ENCODE measurements at regions of chr11 and their contacts with region 1.

Region 1: DNA sequence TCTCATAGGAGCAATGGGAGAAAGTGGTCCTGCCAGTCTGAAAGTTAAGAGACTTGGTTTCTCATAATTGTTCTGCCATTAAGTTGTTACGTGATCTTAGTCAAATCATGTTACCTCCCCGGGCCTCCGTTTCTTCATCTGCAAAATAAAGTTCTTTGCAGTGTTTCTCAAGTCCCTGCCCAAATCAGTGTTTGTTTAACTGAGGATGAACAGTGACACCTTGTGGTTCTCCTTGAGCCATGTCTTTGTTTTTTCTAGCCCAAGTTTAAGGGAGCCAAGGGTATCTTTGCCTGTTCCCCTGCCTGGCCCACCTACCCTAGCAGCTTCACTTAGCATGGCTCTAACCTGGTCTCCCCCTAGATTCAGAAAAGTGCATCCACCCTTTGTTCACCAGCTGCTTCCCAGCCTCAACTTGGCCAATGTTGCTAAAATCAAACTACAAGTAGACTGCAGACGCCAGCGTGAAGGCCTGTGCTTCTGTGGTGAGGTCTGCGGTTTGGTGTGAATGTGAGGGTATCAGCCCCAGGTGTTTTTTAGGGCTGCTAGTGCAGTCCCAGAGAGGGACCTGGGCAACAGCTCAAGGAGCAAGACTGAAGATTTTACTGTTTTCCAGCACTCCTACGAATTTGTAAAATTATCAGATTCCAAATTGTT is 35.5 kb downstream of the FZD4 start:
- DNase-seq: no peak
- H3K4me3 ChIP-seq: no peak overlapping the region
- H3K27ac ChIP-seq: peak overlapping the region; percentile 83
- H3K4me1 ChIP-seq: peaks cover 52% of the 10 kb centered on the region
- H3K27me3 ChIP-seq: no peaks in the 10 kb centered on the region
- CTCF ChIP-seq: peak; percentile 79

Region 2: DNA sequence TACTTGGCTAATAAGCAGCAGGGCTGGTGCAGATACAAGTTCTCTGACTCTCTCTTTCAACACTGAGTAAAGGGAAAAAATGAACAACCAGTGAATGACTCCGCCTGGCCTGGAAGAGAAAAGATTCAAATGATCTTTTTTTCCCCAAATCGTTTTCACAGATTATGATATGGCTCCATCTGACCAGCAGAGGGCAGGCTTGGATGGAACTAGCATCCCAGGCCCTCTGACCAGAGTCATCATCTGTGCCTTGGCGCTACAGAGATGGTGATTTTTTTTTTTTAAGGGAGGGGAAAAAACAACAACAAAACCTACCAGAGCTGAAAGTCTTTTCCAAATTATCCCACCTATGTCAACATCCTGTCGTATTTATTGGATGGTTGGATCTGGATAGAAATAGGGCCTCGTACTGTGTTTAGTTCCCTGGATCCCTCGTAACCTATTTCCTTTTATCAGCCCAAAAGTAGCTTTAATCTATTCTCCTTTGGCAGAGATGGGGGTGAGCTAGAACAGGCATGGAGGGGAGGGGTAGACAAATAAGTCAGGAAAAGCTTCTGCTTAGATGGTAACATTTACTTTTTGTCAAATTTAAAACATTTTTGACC is 49.6 kb before region 1 on chr11:
- intact Hi-C with region 1: loop called (anchors 5 kb)
- DNase-seq: peak; percentile 49
- H3K4me3 ChIP-seq: no peak overlapping the region
- H3K27ac ChIP-seq: peak overlapping the region; percentile 21
- H3K4me1 ChIP-seq: peaks cover 14% of the 10 kb centered on the region
- H3K27me3 ChIP-seq: no peaks in the 10 kb centered on the region
- CTCF ChIP-seq: peak; percentile 82

Region 3: DNA sequence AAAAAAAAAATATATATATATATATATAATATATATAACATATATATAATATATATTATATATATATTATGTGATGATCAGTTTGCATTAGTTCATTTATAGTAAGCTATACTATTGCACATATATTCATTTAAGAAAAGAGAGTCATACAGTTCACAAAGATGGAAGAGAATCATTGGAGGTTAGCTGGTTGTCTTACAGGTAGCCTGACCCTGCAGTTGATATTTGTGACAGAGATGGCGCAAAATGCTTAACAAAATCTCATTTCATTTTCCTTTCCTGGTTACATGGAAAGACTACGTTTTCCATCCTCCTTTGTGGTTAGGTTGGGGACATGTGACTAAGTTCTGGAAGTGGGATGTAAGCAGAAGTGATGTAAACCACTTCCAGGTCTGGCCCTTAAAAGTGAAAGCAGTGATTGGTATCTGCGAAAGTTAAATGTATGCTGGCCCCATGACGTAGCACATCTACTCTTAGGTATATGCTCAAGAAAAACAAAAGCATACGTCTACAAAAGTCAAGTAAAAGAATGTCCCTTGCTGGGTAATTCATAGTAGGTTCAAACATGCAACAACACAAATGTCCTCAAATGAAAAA is 110.9 kb after region 1 on chr11:
- intact Hi-C with region 1: no loop called
- DNase-seq: no peak
- H3K4me3 ChIP-seq: no peak overlapping the region
- H3K27ac ChIP-seq: no peak overlapping the region
- H3K4me1 ChIP-seq: no peaks in the 10 kb centered on the region
- H3K27me3 ChIP-seq: no peaks in the 10 kb centered on the region
- CTCF ChIP-seq: no peak